Colonic mucosa (tissue), 4 donors: ENCODE measurements at regions of chr10 and their contacts with region 1.

Region 1: DNA sequence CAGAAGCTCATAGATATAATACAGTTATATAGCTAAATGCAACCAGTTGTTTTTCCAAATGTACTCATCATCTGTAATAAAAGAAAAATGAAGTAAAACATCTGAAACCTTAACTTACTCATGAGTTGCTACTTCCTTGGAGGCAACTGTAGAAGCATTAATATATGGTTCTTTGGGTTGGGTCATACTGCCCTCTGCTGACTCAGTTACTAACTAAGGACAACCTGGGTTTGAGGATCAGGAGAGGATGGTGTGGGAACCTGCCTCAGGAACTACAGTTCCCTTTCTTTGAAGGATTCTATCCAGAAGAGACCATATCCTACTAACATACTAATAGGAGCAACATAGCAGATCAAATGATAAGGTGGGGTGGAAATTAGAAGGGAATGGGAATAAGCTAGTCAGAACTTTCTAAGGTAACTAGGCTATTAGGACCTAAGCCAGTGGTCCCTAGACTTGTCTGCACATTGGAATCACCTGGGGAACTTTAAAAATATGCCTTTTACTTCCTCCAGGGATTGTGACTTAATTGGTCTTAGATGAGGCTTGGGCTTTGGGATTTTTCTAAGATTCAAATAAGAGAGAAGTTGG is 20.7 kb downstream of the COX15 start:
- DNase-seq: peak; percentile 59
- H3K4me3 ChIP-seq: no peak overlapping the region
- H3K27ac ChIP-seq: no peak overlapping the region
- H3K4me1 ChIP-seq: no peaks in the 10 kb centered on the region
- H3K27me3 ChIP-seq: no peaks in the 10 kb centered on the region
- CTCF ChIP-seq: peak; percentile 31

Region 2: GRCh38 chr10:99484603-99485581 is 226.3 kb before region 1 on chr10:
- intact Hi-C with region 1: no loop called
- DNase-seq: no peak
- H3K4me3 ChIP-seq: no peak overlapping the region
- H3K27ac ChIP-seq: no peak overlapping the region
- H3K4me1 ChIP-seq: no peaks in the 10 kb centered on the region
- H3K27me3 ChIP-seq: no peaks in the 10 kb centered on the region
- CTCF ChIP-seq: no peak

Region 3: DNA sequence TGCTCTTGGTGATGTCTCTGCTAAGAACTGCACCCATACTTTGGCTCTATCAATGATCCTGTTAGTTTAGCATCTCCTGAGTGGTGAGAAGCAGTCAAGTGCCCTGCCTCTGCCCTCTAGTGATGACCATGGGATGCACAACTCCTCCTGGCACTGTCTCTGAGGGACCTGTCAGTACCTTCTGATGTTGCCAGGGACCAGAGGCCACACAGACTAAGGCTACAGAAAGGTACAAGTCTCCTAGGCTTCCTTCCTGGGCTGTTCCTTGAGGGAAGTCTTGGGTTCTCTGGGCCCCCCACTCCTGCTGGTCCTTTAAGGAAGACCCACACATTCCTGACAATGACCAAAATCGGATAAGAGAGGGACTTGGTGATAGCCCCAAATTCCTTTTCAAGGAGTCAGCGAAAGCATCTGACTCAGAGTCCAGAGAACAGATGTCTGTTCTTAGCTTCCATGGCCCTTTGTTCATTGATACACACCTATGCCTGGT is 163.1 kb before region 1 on chr10:
- intact Hi-C with region 1: no loop called
- DNase-seq: no peak
- H3K4me3 ChIP-seq: no peak overlapping the region
- H3K27ac ChIP-seq: no peak overlapping the region
- H3K4me1 ChIP-seq: no peaks in the 10 kb centered on the region
- H3K27me3 ChIP-seq: no peaks in the 10 kb centered on the region
- CTCF ChIP-seq: no peak

Region 4: DNA sequence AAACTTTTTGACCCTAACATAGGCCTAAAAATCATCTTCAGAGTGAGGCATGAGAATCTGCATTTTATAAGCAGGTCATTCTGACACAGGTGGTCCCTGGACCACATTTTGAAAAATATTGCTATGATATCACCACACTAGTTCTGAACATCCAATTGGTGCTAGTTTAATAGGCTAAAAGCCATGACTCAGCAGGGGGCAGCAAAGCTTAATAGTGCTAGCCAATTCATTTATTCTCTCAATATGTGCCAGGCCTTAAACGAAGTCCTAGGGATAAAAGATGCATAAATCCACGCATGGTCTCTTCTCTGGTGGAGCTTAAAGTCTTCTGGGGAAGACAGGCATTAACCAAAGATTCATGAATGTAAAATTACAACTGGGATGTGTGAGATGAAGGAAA is 80.8 kb before region 1 on chr10:
- intact Hi-C with region 1: loop called (anchors 2 kb)
- DNase-seq: peak; percentile 29
- H3K4me3 ChIP-seq: no peak overlapping the region
- H3K27ac ChIP-seq: no peak overlapping the region
- H3K4me1 ChIP-seq: no peaks in the 10 kb centered on the region
- H3K27me3 ChIP-seq: no peaks in the 10 kb centered on the region
- CTCF ChIP-seq: peak; percentile 37

Region 5: GRCh38 chr10:99993701-99994689 is 282.8 kb after region 1 on chr10:
- intact Hi-C with region 1: no loop called
- DNase-seq: peak; percentile 53
- H3K4me3 ChIP-seq: no peak overlapping the region
- H3K27ac ChIP-seq: peak overlapping the region; percentile 25
- H3K4me1 ChIP-seq: no peaks in the 10 kb centered on the region
- H3K27me3 ChIP-seq: no peaks in the 10 kb centered on the region
- CTCF ChIP-seq: no peak